K562 (cell line): ENCODE measurements at regions of chr3 and their contacts with region 1.

Region 1: GRCh38 chr3:58532794-58533220 is 4.2 kb downstream of the ACOX2 start:
- DNase-seq: peak; percentile 72 to 79 (median 74)
- ATAC-seq: peak; percentile 95
- H3K4me3 ChIP-seq: no peak overlapping the region
- H3K27ac ChIP-seq: no peak overlapping the region
- H3K4me1 ChIP-seq: peaks cover 7 to 13% of the 10 kb centered on the region in 2 experiments; a peak in 3 of 5 replicates
- H3K27me3 ChIP-seq: peaks cover 0 to 5% of the 10 kb centered on the region in 2 experiments; a peak in 1 of 5 replicates
- CTCF ChIP-seq: peak; percentile 85 to 89 (median 89)
- EP300 ChIP-seq: no peak
- POLR2A ChIP-seq: no peak
- RAD21 ChIP-seq: peak; percentile 79 to 89

Region 2: GRCh38 chr3:58206406-58207011 is 326.3 kb before region 1 on chr3:
- CTCF ChIA-PET with region 1: no interaction called
- POLR2A ChIA-PET with region 1: no interaction called
- in situ Hi-C with region 1: no loop called
- intact Hi-C with region 1: no loop called
- DNase-seq: peak in 1 of 4 experiments; percentile 22
- ATAC-seq: peak; percentile 58
- H3K4me3 ChIP-seq: no peak overlapping the region
- H3K27ac ChIP-seq: no peak overlapping the region
- H3K4me1 ChIP-seq: no peaks in the 10 kb centered on the region
- H3K27me3 ChIP-seq: peaks cover 9 to 47% of the 10 kb centered on the region in 2 experiments; a peak in 4 of 5 replicates
- CTCF ChIP-seq: no peak
- EP300 ChIP-seq: no peak
- POLR2A ChIP-seq: no peak
- RAD21 ChIP-seq: no peak

Region 3: GRCh38 chr3:58249358-58250092 is 283.3 kb before region 1 on chr3:
- CTCF ChIA-PET with region 1: no interaction called
- POLR2A ChIA-PET with region 1: no interaction called
- in situ Hi-C with region 1: no loop called
- intact Hi-C with region 1: no loop called
- DNase-seq: peak in 1 of 4 experiments; percentile 30
- ATAC-seq: peak; percentile 69
- H3K4me3 ChIP-seq: no peak overlapping the region
- H3K27ac ChIP-seq: no peak overlapping the region
- H3K4me1 ChIP-seq: peaks cover 0 to 10% of the 10 kb centered on the region in 2 experiments; a peak in 3 of 5 replicates
- H3K27me3 ChIP-seq: no peaks in the 10 kb centered on the region
- CTCF ChIP-seq: peak in 2 of 3 experiments; percentile 6 to 15; a peak in 2 of 6 replicates
- EP300 ChIP-seq: no peak
- POLR2A ChIP-seq: no peak
- RAD21 ChIP-seq: no peak

Region 4: GRCh38 chr3:58305882-58306711 is 226.7 kb before region 1 on chr3 and contains the starts of genes HTD2 and RPP14:
- CTCF ChIA-PET with region 1: interaction called, 4 read pairs
- POLR2A ChIA-PET with region 1: interaction called, 3 read pairs
- in situ Hi-C with region 1: no loop called
- intact Hi-C with region 1: loop called (anchors 2 kb)
- DNase-seq: peak; percentile 88 to 96 (median 90)
- ATAC-seq: peak; percentile 95
- H3K4me3 ChIP-seq: peak within 1 kb of the TSS; percentile 80
- H3K27ac ChIP-seq: peak within 1 kb of the TSS; percentile 96
- H3K4me1 ChIP-seq: peaks cover 0 to 7% of the 10 kb centered on the region in 2 experiments; a peak in 3 of 5 replicates
- H3K27me3 ChIP-seq: no peaks in the 10 kb centered on the region
- CTCF ChIP-seq: peak; percentile 87 to 92 (median 91)
- EP300 ChIP-seq: peak; percentile 28; the same call in 1 of the 2 replicates
- POLR2A ChIP-seq: peak; percentile 86
- RAD21 ChIP-seq: peak; percentile 27 to 55; a peak in 3 of 4 replicates
- polyA plus RNA-seq, gene HTD2: 13.9 to 22.8 TPM
- polyA plus RNA-seq, gene RPP14: 20.5 to 20.8 TPM

Region 5: GRCh38 chr3:58324391-58325390 is 208.1 kb before region 1 on chr3:
- CTCF ChIA-PET with region 1: interaction called, 3 read pairs
- POLR2A ChIA-PET with region 1: no interaction called
- in situ Hi-C with region 1: loop called (anchors 5 kb)
- intact Hi-C with region 1: loop called (anchors 5 kb)
- DNase-seq: no peak
- ATAC-seq: no peak
- H3K4me3 ChIP-seq: no peak overlapping the region
- H3K27ac ChIP-seq: no peak overlapping the region
- H3K4me1 ChIP-seq: peaks cover 9 to 18% of the 10 kb centered on the region in 2 experiments; a peak in 4 of 5 replicates
- H3K27me3 ChIP-seq: no peaks in the 10 kb centered on the region
- CTCF ChIP-seq: no peak
- EP300 ChIP-seq: no peak
- POLR2A ChIP-seq: no peak
- RAD21 ChIP-seq: no peak

Region 6: GRCh38 chr3:58429657-58430056 is 103.2 kb before region 1 on chr3:
- CTCF ChIA-PET with region 1: interaction called, 3 read pairs
- POLR2A ChIA-PET with region 1: interaction called, 3 read pairs
- in situ Hi-C with region 1: loop called (anchors 5 kb)
- intact Hi-C with region 1: no loop called
- DNase-seq: no peak
- ATAC-seq: no peak
- H3K4me3 ChIP-seq: no peak overlapping the region
- H3K27ac ChIP-seq: no peak overlapping the region
- H3K4me1 ChIP-seq: peaks cover 0 to 2% of the 10 kb centered on the region in 2 experiments; a peak in 2 of 5 replicates
- H3K27me3 ChIP-seq: no peaks in the 10 kb centered on the region
- CTCF ChIP-seq: no peak
- EP300 ChIP-seq: no peak
- POLR2A ChIP-seq: no peak
- RAD21 ChIP-seq: no peak

Region 7: DNA sequence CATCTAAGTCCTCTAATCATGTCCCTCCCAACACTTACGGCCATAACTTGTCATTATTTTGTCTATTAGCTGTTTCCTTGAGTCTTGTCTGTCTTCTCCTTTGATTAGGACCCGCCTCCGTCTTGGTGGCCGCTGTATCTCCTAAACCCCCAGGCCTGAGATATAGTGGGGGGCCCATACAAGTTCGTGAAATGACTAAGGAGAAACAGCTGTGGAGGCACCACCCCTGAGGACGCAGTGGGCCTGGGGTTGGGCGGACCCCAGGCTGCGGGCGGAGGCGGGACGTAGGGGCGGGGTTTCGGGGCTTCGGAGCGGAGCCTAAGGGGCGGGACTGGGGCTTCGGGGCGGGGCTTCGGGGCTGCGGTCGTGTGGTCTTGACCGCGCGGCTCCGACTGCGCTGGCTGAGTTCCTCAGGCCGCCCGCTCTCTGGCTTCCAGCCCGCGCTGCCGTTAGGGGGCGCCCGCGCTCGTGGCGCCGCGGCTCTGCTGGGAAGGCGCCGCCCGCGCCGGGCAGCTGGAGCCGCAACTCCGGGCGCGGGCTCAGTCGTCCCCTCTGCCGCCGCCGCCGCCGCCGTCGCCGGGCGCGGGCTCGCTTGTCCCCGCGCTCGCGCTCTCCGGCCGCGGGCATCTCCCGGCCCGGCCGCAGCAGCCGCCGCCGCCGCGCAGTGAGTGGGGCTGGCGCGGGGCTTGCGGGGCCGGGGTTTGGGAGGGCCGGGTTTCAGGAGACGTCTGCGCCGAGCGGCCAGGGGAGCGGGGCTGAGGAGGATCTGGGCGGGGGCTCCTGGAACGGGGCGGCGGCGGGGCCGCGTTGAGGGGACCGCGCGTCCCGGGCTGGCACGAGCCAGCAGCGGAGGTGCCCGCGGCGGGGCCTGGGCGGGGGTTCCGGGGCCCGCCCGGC is 41.1 kb before region 1 on chr3 and contains the start of gene KCTD6:
- CTCF ChIA-PET with region 1: interaction called, 3 read pairs
- POLR2A ChIA-PET with region 1: interaction called, 3 read pairs
- in situ Hi-C with region 1: no loop called
- intact Hi-C with region 1: loop called (anchors 2 kb)
- DNase-seq: peak; percentile 89 to 91 (median 90)
- ATAC-seq: peak; percentile 99
- H3K4me3 ChIP-seq: peak within 1 kb of the TSS; percentile 73
- H3K27ac ChIP-seq: peak within 1 kb of the TSS; percentile 39; the same call in 1 of the 3 replicates
- H3K4me1 ChIP-seq: peaks cover 23 to 26% of the 10 kb centered on the region in 2 experiments; a peak in 4 of 5 replicates
- H3K27me3 ChIP-seq: no peaks in the 10 kb centered on the region
- CTCF ChIP-seq: peak; percentile 37 to 94 (median 83); a peak in 5 of 6 replicates
- EP300 ChIP-seq: no peak
- POLR2A ChIP-seq: 0 out of 2 replicates have a peak, but pooled peaks have one; percentile 39
- RAD21 ChIP-seq: peak; percentile 59 to 67
- polyA plus RNA-seq, gene KCTD6: 4.0 to 4.5 TPM